CD4-positive, alpha-beta T cell (primary cell): ENCODE measurements at regions of chr4 and their contacts with region 1.

Region 1: DNA sequence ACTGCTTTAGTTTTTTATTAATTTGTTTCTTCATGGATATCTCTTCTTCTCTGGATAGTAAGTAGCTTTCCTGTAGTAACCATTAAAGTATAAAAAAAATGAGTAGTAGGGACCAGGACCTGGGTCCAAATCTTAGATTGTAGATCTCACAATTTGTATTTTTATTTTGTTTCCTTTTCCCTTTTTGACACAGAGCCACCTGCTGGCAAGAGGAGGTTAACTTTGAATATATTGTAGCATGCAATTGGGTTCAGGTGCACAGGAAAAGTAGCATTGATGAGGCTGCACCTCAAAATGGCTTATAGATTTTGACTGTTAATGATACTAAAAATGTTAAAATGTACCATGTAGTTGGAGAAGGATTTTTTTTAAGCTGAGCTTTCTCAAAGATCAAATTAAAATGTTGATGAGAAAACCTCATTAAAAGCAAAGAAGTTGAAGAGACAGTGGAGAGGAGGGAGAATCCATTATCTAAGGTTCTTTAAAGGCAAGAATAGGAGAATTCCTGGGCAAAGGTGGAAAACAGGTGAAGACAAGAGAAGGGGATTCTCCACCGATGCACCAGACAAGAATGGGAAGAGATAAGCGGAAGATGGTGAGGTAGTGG is 48.3 kb upstream of the HPGDS start:
- DNase-seq: peak in 4 of 14 experiments; percentile 10 to 27 (median 20)
- ATAC-seq: no peak
- H3K4me3 ChIP-seq: no peak overlapping the region
- H3K4me3 Mint-ChIP-seq: no peak overlapping the region
- H3K27ac ChIP-seq: no peak overlapping the region
- H3K27ac Mint-ChIP-seq: no peak overlapping the region
- H3K4me1 ChIP-seq: no peaks in the 10 kb centered on the region
- H3K4me1 Mint-ChIP-seq: no peaks in the 10 kb centered on the region
- H3K27me3 ChIP-seq: no peaks in the 10 kb centered on the region
- H3K27me3 Mint-ChIP-seq: peaks cover 4% of the 10 kb centered on the region
- CTCF ChIP-seq: peak; percentile 55

Region 2: GRCh38 chr4:94304365-94304971 is 86.4 kb before region 1 on chr4:
- CTCF ChIA-PET with region 1: no interaction called
- POLR2A ChIA-PET with region 1: no interaction called
- intact Hi-C with region 1: loop called (anchors 2 to 5 kb)
- DNase-seq: peak in 4 of 14 experiments; percentile 9 to 49 (median 29)
- ATAC-seq: no peak
- H3K4me3 ChIP-seq: no peak overlapping the region
- H3K4me3 Mint-ChIP-seq: no peak overlapping the region
- H3K27ac ChIP-seq: no peak overlapping the region
- H3K27ac Mint-ChIP-seq: no peak overlapping the region
- H3K4me1 ChIP-seq: no peaks in the 10 kb centered on the region
- H3K4me1 Mint-ChIP-seq: no peaks in the 10 kb centered on the region
- H3K27me3 ChIP-seq: no peaks in the 10 kb centered on the region
- H3K27me3 Mint-ChIP-seq: no peaks in the 10 kb centered on the region
- CTCF ChIP-seq: peak; percentile 62